Activated naive CD4-positive, alpha-beta T cell treated with anti-CD3 and anti-CD28 coated beads for 36 hours (primary cell): ENCODE measurements at regions of chr6 and their contacts with region 1.

Region 1: GRCh38 chr6:14734416-14735340 is 511.2 kb upstream of the JARID2 start:
- DNase-seq: peak; percentile 74
- H3K4me3 Mint-ChIP-seq: peak overlapping the region; percentile 54
- H3K27ac Mint-ChIP-seq: peak overlapping the region; percentile 96
- H3K4me1 Mint-ChIP-seq: peaks cover 97% of the 10 kb centered on the region
- H3K27me3 Mint-ChIP-seq: no peaks in the 10 kb centered on the region

Region 2: DNA sequence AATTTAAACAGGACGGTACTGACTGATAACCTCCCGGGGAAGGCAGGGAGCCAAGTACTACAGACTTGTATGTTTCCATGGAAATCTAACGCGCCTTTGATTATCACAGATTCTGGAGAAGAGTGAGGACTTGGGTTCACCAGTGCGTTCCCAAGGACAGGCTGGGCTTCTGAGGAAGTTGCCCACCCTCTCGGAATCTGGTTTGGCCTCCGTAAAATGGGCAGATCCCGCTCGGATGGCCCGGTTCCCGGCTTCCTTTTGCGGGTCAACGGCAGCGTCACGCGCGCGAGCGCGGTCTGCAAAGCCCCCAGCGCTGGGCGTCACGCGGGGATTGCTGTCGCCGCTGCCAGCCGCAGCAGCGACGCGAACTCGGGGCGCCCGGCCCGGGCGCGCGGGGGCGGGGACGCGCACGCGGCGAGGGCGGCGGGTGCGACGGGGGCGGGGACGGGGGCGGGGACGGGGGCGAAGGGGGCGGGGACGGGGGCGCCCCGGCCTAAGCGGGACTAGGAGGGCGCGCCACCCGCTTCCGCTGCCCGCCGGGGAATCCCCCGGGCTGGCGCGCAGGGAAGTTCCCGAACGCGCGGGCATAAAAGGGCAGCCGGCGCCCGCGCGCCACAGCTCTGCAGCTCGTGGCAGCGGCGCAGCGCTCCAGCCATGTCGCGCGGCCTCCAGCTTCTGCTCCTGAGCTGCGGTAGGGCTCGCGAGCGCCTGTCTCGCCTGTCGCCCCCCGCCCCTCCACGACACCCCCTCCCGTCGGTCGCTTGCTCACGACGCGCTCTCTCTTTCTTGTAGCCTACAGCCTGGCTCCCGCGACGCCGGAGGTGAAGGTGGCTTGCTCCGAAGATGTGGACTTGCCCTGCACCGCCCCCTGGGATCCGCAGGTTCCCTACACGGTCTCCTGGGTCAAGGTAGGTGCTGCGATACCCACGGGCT is 617.3 kb before region 1 on chr6 and contains the start of gene CD83:
- CTCF ChIA-PET with region 1: no interaction called
- intact Hi-C with region 1: loop called (anchors 1 kb)
- DNase-seq: peak; percentile 75
- H3K4me3 Mint-ChIP-seq: peak within 1 kb of the TSS; percentile 93
- H3K27ac Mint-ChIP-seq: peak within 1 kb of the TSS; percentile 87
- H3K4me1 Mint-ChIP-seq: peaks cover 36% of the 10 kb centered on the region
- H3K27me3 Mint-ChIP-seq: peaks cover 2% of the 10 kb centered on the region
- total RNA-seq, gene CD83: 11.9 to 13.8 TPM

Region 3: GRCh38 chr6:14393910-14394309 is 340.8 kb before region 1 on chr6:
- CTCF ChIA-PET with region 1: no interaction called
- intact Hi-C with region 1: no loop called
- DNase-seq: no peak
- H3K4me3 Mint-ChIP-seq: no peak overlapping the region
- H3K27ac Mint-ChIP-seq: no peak overlapping the region
- H3K4me1 Mint-ChIP-seq: peaks cover 10% of the 10 kb centered on the region
- H3K27me3 Mint-ChIP-seq: no peaks in the 10 kb centered on the region

Region 4: DNA sequence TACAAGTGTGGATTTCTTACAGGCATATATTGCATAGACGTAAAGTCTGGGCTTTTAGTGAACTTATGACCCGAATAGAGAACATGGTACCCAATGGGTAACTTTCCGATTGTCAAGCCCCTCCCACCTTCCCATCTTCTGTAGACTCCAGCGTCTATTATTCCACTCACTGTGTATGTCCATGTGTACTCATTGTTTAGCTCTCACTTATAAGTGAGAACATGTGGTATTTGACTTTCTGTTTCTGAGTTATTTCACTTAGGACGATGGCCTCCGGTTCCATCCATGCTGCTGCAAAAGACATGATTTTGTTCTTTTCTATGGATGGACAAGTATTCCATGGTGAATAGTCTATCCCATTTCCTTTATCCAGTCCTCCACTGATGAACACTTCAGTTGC is 310.7 kb before region 1 on chr6:
- CTCF ChIA-PET with region 1: no interaction called
- intact Hi-C with region 1: loop called (anchors 2 kb)
- DNase-seq: no peak
- H3K4me3 Mint-ChIP-seq: no peak overlapping the region
- H3K27ac Mint-ChIP-seq: peak overlapping the region; percentile 57
- H3K4me1 Mint-ChIP-seq: peaks cover 23% of the 10 kb centered on the region
- H3K27me3 Mint-ChIP-seq: no peaks in the 10 kb centered on the region

Region 5: DNA sequence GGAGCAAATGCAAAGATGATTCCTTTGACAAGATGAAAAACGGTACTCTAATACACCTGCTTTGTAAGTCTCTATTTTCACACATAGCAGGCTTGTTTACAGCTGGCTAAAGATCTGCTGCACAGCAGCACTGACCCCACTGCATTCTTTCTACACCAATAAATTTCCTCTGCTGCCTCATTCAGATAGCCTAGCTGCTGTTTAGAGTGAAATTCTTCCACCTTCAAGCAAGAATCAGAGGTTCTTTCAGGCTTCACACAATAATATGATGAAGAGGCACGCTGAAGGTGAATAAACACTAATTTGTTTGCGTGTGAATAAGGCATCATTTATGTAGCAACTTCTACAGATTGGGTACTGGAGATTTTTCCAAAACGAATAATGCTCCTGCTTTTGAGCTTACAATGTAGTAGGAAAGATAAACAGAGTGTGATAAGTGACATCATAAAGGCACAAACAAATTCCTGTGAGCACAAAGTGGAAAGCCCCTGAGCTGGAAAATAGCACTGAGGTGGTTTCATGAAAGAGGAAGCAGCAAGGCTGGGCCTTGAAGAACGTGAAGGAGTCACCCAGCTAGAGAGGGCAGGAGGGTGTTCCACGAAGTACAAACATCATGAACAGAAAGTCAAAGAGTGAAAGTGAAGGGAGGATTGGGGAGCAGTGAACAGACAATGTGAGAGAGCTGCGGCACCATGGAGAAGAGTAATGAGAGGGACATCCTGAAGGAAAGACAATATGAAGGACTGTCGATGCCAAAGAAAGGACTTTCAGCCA is 73.7 kb before region 1 on chr6:
- CTCF ChIA-PET with region 1: interaction called, 3 read pairs
- intact Hi-C with region 1: loop called (anchors 1 kb)
- DNase-seq: peak; percentile 71
- H3K4me3 Mint-ChIP-seq: no peak overlapping the region
- H3K27ac Mint-ChIP-seq: no peak overlapping the region
- H3K4me1 Mint-ChIP-seq: peaks cover 44% of the 10 kb centered on the region
- H3K27me3 Mint-ChIP-seq: no peaks in the 10 kb centered on the region

Region 6: DNA sequence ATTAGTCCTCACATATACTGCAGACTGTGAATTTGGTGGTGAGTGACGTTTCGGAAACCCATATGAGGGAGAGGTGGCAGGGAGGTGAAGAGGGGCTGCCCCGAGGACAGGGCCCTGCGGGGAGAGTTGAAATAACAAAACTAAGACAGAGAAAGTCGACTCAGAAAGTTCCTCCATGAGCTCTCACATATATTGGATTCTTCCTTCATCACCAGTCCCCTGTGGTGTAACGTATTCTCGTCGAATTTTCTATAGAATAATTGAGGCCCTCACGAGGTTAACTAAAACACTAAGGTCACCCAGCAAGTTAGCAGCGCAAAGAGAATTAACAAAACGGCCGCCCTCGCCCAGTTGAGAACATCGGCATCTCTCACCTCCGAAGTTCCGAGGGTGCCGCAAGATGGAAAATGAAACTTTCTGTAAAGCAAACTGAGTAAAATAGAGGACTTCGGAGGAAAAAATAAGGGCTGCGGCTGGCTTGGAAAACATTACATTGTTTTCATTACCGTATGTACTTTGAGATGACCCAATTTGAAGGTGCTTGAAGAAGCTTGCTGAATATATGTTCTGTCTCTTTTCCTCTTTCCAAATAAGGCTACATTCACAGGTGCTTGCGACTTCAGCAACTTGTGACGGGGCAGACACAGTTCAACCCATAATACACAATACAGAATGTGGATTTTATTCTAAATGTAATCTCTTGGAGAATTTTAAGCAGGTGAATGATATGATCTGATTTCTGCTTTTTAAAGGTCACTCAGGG is 20.3 kb after region 1 on chr6:
- CTCF ChIA-PET with region 1: no interaction called
- intact Hi-C with region 1: no loop called
- DNase-seq: peak; percentile 51
- H3K4me3 Mint-ChIP-seq: no peak overlapping the region
- H3K27ac Mint-ChIP-seq: peak overlapping the region; percentile 68
- H3K4me1 Mint-ChIP-seq: peaks cover 16% of the 10 kb centered on the region
- H3K27me3 Mint-ChIP-seq: no peaks in the 10 kb centered on the region

Region 7: DNA sequence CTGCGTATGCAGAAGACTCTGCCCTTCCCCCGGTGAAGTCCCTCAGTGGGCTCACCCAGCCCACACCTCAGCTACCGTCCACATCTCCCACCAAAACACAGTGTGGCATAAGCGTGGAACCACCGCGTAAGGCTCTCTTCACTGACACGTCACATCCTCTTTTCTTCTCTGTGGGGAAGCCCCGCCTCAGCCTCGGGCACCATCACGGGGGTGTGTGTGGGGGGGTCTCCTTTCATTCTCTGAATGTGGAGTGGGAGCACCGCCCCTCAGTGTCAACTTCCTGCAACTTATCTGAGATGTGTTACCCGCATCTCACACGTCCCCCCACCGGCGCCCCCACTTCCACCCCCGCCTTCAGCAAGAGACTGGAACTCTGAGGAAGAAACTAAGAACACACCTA is 122.8 kb after region 1 on chr6:
- CTCF ChIA-PET with region 1: no interaction called
- intact Hi-C with region 1: loop called (anchors 1 kb)
- DNase-seq: peak; percentile 79
- H3K4me3 Mint-ChIP-seq: peak overlapping the region; percentile 36
- H3K27ac Mint-ChIP-seq: peak overlapping the region; percentile 91
- H3K4me1 Mint-ChIP-seq: peaks cover 28% of the 10 kb centered on the region
- H3K27me3 Mint-ChIP-seq: no peaks in the 10 kb centered on the region

Region 8: GRCh38 chr6:14984519-14984853 is 249.8 kb after region 1 on chr6:
- CTCF ChIA-PET with region 1: no interaction called
- intact Hi-C with region 1: no loop called
- DNase-seq: no peak
- H3K4me3 Mint-ChIP-seq: no peak overlapping the region
- H3K27ac Mint-ChIP-seq: no peak overlapping the region
- H3K4me1 Mint-ChIP-seq: no peaks in the 10 kb centered on the region
- H3K27me3 Mint-ChIP-seq: peaks cover 3% of the 10 kb centered on the region

Region 9: DNA sequence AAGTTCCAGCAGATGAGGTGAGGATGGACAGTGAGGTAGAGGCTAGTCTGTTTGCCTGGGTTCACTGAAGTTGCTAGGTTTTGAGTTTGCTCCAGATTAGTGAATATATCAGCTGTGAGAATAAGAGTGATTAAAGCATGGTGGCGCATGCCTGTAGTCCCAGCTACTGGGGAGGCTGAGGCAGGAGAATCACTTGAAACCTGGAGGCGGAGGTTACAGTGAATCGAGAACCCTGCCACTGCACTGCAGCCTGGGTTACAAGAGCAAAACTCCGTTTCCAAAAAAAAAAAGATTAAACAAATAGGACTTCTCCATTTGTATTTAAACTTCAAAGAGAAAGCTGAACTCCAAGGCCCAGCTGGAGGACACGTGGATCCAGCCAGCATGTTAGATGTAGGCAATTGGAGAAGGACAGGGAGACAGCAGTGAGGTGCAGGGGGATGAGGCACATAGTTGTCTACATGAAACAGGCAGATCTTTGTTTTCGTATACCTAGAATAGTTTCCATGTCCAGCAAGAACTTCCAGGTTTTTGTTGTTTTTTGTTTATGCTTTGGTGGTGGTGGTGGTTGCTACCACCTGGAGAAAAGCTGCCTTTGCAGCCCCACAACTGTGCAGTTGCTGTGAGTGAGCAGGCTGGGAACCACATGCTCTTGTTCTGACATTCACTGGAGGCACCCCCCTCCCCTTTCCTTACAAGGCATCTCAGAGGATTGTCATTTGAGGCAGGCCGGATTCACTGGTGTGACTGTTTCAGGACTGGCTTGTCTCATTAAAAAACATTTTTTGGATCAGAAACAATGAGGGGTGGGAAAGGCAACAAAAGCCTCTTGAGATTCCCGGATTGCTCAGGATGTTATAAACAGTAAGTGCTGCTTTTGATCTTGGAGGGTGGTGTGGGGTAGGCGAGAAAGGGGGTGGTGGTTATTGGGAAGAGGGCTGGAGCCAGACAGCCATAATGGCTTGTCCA is 583.5 kb after region 1 on chr6:
- CTCF ChIA-PET with region 1: no interaction called
- intact Hi-C with region 1: loop called (anchors 2 kb)
- DNase-seq: peak; percentile 72
- H3K4me3 Mint-ChIP-seq: peak overlapping the region; percentile 57
- H3K27ac Mint-ChIP-seq: peak overlapping the region; percentile 84
- H3K4me1 Mint-ChIP-seq: peaks cover 93% of the 10 kb centered on the region
- H3K27me3 Mint-ChIP-seq: no peaks in the 10 kb centered on the region

Region 10: DNA sequence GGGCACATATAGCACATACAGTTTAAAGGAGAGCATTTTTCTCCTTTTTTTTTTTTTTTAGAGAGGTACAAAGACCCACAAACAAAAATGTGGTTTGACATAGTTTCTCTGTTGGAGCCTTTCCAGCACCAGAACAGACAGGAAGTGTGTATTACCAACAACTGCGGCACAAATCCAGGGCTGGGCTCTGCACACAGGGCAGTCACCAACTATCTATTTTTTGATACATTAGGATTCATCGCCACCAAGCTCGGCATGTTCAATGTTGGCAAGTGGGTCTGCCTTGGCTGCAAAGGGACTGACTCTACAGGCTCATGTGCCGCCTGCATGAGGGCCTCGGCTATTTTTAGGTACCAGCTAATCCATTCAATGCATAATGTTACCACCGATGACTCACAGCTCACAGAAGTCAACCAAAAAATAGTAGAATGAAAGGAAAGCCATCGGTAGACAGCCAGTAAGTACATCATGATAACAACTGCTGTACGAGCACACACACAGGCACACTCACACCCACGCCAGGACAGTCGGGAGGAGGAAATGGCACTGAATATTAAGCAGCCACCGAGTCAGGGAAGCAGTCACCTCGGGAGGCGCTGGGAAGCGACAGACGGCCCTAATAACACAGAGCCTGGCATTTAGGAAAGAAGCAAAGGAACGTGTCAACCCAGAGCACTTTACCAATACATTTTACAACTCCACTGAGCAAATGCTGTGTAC is 1585.3 kb after region 1 on chr6:
- CTCF ChIA-PET with region 1: no interaction called
- intact Hi-C with region 1: loop called (anchors 10 kb)
- DNase-seq: peak; percentile 86
- H3K4me3 Mint-ChIP-seq: peak overlapping the region; percentile 54
- H3K27ac Mint-ChIP-seq: peak overlapping the region; percentile 85
- H3K4me1 Mint-ChIP-seq: peaks cover 75% of the 10 kb centered on the region
- H3K27me3 Mint-ChIP-seq: no peaks in the 10 kb centered on the region